HAP-1 (cell line): ENCODE measurements at regions of chr6 and their contacts with region 1.

Region 1: GRCh38 chr6:56364827-56365313 is 117.5 kb upstream of the COL21A1 start:
- DNase-seq: no peak
- H3K4me3 ChIP-seq: no peak overlapping the region
- H3K4me1 ChIP-seq: peaks cover 7% of the 10 kb centered on the region
- H3K27me3 ChIP-seq: no peaks in the 10 kb centered on the region

Region 2: DNA sequence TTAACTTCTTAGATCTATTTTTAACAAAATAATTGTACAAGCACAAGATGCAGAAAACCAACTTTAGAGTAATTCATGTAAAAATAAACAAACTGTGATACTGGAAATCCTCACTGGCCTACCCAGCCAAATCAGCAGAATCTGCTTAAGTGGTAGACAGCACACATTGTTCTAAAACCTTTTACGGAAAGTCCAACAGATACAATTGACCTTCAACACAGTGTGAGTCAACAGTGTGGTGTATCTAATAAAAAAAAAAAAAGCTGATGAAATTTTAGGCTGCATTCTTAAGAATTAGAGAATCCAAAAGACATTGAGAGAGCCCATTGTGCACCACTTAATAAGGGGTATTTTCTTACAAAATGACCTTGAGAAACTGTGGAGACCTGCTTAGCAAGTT is 292.0 kb before region 1 on chr6:
- in situ Hi-C with region 1: no loop called
- DNase-seq: no peak
- H3K4me3 ChIP-seq: no peak overlapping the region
- H3K4me1 ChIP-seq: no peaks in the 10 kb centered on the region
- H3K27me3 ChIP-seq: no peaks in the 10 kb centered on the region; the same call in 1 of the 2 replicates

Region 3: DNA sequence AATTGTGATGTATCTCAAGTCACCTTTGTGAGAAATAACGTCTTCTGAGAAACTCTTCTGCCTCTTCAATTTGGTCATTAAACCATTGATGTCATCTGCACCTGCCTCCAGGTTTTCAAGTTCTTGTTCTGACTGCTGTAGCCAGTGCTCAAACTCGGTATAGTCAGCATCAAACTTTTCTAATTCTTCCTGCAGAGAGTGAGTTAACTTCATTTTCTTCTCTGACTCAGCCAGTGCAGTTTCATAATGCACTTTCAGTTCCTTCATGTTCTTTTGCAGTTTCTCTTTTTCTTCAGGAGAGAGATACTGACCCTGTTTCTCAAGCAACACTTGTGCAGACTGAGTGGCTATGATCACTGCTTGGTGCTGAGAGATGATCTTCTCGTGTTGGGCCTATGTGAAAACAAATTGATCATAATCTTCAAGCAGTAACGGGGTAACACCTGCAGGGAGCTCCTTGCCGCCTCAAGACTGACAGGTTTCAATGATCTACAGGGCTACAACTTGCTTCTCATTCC is 229.0 kb after region 1 on chr6:
- in situ Hi-C with region 1: loop called (anchors 5 kb)
- DNase-seq: no peak
- H3K4me3 ChIP-seq: no peak overlapping the region
- H3K4me1 ChIP-seq: no peaks in the 10 kb centered on the region
- H3K27me3 ChIP-seq: no peaks in the 10 kb centered on the region